HCT116 (cell line): ENCODE measurements at regions of chr1 and their contacts with region 1.

Region 1: GRCh38 chr1:78437396-78437795 is 53.4 kb upstream of the PTGFR start:
- DNase-seq: no peak
- ATAC-seq: no peak
- H3K4me3 ChIP-seq: no peak overlapping the region
- H3K27ac ChIP-seq: no peak overlapping the region
- H3K4me1 ChIP-seq: no peaks in the 10 kb centered on the region
- H3K27me3 ChIP-seq: no peaks in the 10 kb centered on the region
- CTCF ChIP-seq: no peak
- POLR2A ChIP-seq: no peak
- RAD21 ChIP-seq: no peak

Region 2: GRCh38 chr1:78385744-78386462 is 51.5 kb before region 1 on chr1:
- CTCF ChIA-PET with region 1: no interaction called
- POLR2A ChIA-PET with region 1: no interaction called
- RAD21 ChIA-PET with region 1: no interaction called
- intact Hi-C with region 1: loop called (anchors 5 kb)
- DNase-seq: no peak
- ATAC-seq: no peak
- H3K4me3 ChIP-seq: no peak overlapping the region
- H3K27ac ChIP-seq: no peak overlapping the region
- H3K4me1 ChIP-seq: no peaks in the 10 kb centered on the region
- H3K27me3 ChIP-seq: no peaks in the 10 kb centered on the region
- CTCF ChIP-seq: no peak
- POLR2A ChIP-seq: no peak
- RAD21 ChIP-seq: no peak